PC-3 (cell line): ENCODE measurements at regions of chr14 and their contacts with region 1.

Region 1: DNA sequence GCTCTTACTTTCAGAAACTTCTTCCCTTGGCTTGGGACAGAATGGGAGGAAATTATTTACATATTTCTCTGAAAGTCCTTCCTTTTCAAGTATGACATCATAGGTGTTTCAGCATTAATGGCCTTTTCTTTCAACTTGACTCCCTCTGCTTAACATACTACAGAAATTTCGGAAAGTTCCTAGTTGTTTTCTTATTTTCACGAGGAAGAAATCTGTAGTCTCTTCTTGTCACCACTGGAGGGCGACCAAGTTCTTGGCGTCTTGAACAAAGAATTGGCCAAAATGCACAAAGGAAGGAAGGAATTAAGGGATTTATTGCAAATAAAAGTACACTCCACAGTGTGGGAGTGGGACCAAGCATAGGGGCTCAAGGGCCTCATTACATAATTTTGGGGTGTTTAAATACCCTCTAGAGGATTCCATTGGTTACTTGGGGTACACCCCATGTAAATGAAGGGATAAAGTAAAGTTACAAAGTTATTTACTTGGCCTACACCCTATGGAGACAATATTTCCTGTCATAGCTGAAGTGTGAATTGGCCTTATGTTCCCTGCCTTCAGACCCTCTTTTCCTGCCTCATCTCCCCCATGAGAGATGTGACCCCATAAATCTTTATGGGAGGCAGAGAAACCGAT is 70.4 kb downstream of the RPL10L start:
- DNase-seq: peak; percentile 58
- ATAC-seq: no peak
- H3K4me3 ChIP-seq: no peak overlapping the region
- H3K27ac ChIP-seq: no peak overlapping the region
- H3K4me1 ChIP-seq: no peaks in the 10 kb centered on the region
- H3K27me3 ChIP-seq: no peaks in the 10 kb centered on the region
- CTCF ChIP-seq: peak; percentile 86

Region 2: DNA sequence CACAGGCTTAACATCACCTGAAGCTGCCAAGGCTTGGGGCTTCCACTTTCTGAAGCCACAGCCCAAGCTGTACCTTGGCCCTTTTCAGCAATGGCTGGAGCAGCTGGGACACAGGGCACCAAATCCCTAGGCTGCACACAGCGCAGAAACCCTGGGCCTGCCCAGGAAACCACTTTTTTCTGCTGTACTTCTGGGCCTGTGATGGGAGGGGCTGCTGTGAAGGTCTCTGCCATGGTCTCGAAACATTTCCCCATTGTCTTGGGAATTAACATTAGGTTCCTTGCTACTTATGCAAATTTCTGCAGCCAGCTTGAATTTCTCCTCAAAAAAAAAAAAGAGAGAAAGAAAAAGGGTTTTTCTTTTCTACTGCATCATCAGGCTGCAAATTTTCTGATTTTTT is 148.6 kb before region 1 on chr14:
- CTCF ChIA-PET with region 1: no interaction called
- POLR2A ChIA-PET with region 1: no interaction called
- intact Hi-C with region 1: no loop called
- DNase-seq: no peak
- ATAC-seq: no peak
- H3K4me3 ChIP-seq: no peak overlapping the region
- H3K27ac ChIP-seq: no peak overlapping the region
- H3K4me1 ChIP-seq: no peaks in the 10 kb centered on the region
- H3K27me3 ChIP-seq: no peaks in the 10 kb centered on the region; the same call in 1 of the 2 replicates
- CTCF ChIP-seq: no peak

Region 3: DNA sequence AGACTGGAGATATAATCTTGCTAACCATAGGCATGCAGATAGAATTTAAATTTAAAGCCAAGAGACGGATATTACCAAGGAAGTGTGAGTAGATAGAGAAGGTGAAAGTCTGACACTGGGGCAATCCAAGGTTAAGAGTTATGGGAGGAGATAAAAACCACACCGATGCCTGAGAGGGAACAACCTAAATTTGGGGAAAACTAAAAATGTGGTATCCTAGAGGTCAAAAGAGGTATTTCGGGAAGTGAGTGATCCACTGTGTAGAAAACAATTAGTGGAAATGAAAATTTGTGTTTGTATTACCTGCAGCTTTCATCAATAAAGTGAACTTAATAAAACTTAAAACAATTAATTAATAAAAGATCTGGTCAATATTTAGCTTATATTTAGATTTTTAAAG is 339.4 kb after region 1 on chr14:
- CTCF ChIA-PET with region 1: no interaction called
- POLR2A ChIA-PET with region 1: no interaction called
- intact Hi-C with region 1: loop called (anchors 2 kb)
- DNase-seq: no peak
- ATAC-seq: no peak
- H3K4me3 ChIP-seq: no peak overlapping the region
- H3K27ac ChIP-seq: no peak overlapping the region
- H3K4me1 ChIP-seq: no peaks in the 10 kb centered on the region
- H3K27me3 ChIP-seq: peaks cover 28% of the 10 kb centered on the region; the same call in 1 of the 2 replicates
- CTCF ChIP-seq: no peak; the same call in 1 of the 2 replicates

Region 4: DNA sequence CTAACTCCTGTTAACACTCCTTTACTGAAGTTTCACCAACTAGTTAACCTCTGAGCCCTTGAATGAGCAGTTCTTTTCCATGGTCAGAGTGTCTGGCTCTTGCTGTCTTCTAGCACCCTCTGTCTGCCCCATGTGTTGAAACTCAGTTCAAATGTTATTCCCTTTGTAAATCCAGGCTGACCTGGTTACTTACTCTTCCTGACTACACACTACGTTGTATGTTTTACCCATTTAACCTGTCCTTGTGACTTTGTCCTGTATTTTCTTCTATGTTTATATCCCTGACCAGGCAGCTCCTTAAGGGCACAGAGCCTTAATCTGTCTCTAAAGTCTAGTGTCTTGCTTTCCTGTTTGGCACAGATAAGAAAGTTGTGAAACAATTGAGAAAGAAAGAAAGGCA is 459.4 kb after region 1 on chr14:
- CTCF ChIA-PET with region 1: no interaction called
- POLR2A ChIA-PET with region 1: no interaction called
- intact Hi-C with region 1: loop called (anchors 1 kb)
- DNase-seq: peak; percentile 30
- ATAC-seq: peak; percentile 49
- H3K4me3 ChIP-seq: no peak overlapping the region
- H3K27ac ChIP-seq: no peak overlapping the region
- H3K4me1 ChIP-seq: no peaks in the 10 kb centered on the region
- H3K27me3 ChIP-seq: peaks cover 3% of the 10 kb centered on the region; the same call in 1 of the 2 replicates
- CTCF ChIP-seq: peak; percentile 56